ENCODE measurements at regions of chr7 and their contacts with region 1.

Region 1: GRCh38 chr7:39517240-39517639 is 49.0 kb upstream of the YAE1 start:
- DNase-seq: no peak
- H3K4me3 ChIP-seq: no peak overlapping the region
- H3K4me3 Mint-ChIP-seq: no peak overlapping the region
- H3K27ac ChIP-seq: no peak overlapping the region
- H3K27ac Mint-ChIP-seq: no peak overlapping the region
- H3K4me1 ChIP-seq: no peaks in the 10 kb centered on the region
- H3K4me1 Mint-ChIP-seq: peaks cover 0 to 4% (median 3%) of the 10 kb centered on the region in 4 donors
- H3K27me3 ChIP-seq: no peaks in the 10 kb centered on the region
- H3K27me3 Mint-ChIP-seq: peaks cover 1 to 15% of the 10 kb centered on the region in 2 donors

Region 2: GRCh38 chr7:39453743-39454355 is 63.4 kb before region 1 on chr7:
- CTCF ChIA-PET with region 1: interaction called, 8 read pairs
- POLR2A ChIA-PET with region 1: no interaction called
- intact Hi-C with region 1: loop called (anchors 1 kb)
- DNase-seq: peak in 4 of 5 donors; percentile 26 to 35 (median 32)
- H3K4me3 ChIP-seq: no peak overlapping the region
- H3K4me3 Mint-ChIP-seq: no peak overlapping the region
- H3K27ac ChIP-seq: no peak overlapping the region
- H3K27ac Mint-ChIP-seq: no peak overlapping the region
- H3K4me1 ChIP-seq: no peaks in the 10 kb centered on the region
- H3K4me1 Mint-ChIP-seq: peaks cover 0 to 1% (median 0%) of the 10 kb centered on the region in 4 donors
- H3K27me3 ChIP-seq: no peaks in the 10 kb centered on the region
- H3K27me3 Mint-ChIP-seq: peaks cover 10 to 12% of the 10 kb centered on the region in 2 donors

Region 3: GRCh38 chr7:39825401-39825980 is 308.3 kb after region 1 on chr7:
- CTCF ChIA-PET with region 1: no interaction called
- POLR2A ChIA-PET with region 1: no interaction called
- intact Hi-C with region 1: no loop called
- DNase-seq: no peak
- H3K4me3 ChIP-seq: no peak overlapping the region
- H3K4me3 Mint-ChIP-seq: no peak overlapping the region
- H3K27ac ChIP-seq: no peak overlapping the region
- H3K27ac Mint-ChIP-seq: no peak overlapping the region
- H3K4me1 ChIP-seq: no peaks in the 10 kb centered on the region
- H3K4me1 Mint-ChIP-seq: peaks cover 0 to 2% (median 0%) of the 10 kb centered on the region in 4 donors
- H3K27me3 ChIP-seq: peaks cover 14% of the 10 kb centered on the region
- H3K27me3 Mint-ChIP-seq: peaks cover 29 to 37% of the 10 kb centered on the region in 2 donors

Region 4: GRCh38 chr7:40429826-40430225 is 912.6 kb after region 1 on chr7:
- CTCF ChIA-PET with region 1: no interaction called
- POLR2A ChIA-PET with region 1: no interaction called
- intact Hi-C with region 1: no loop called
- DNase-seq: no peak
- H3K4me3 ChIP-seq: no peak overlapping the region
- H3K4me3 Mint-ChIP-seq: no peak overlapping the region
- H3K27ac ChIP-seq: no peak overlapping the region
- H3K27ac Mint-ChIP-seq: no peak overlapping the region
- H3K4me1 ChIP-seq: no peaks in the 10 kb centered on the region
- H3K4me1 Mint-ChIP-seq: no peaks in the 10 kb centered on the region
- H3K27me3 ChIP-seq: no peaks in the 10 kb centered on the region
- H3K27me3 Mint-ChIP-seq: no peaks in the 10 kb centered on the region

Measured in CD4-positive, alpha-beta memory T cell (primary cell).